ENCODE measurements at regions of chr9 and their contacts with region 1.

Region 1: GRCh38 chr9:131334629-131335367 is 45.3 kb downstream of the PLPP7 start:
- DNase-seq: no peak
- ATAC-seq: no peak
- H3K4me3 ChIP-seq: no peak overlapping the region
- H3K27ac ChIP-seq: no peak overlapping the region
- H3K4me1 ChIP-seq: no peaks in the 10 kb centered on the region; the same call in 1 of the 2 replicates
- H3K27me3 ChIP-seq: no peaks in the 10 kb centered on the region
- CTCF ChIP-seq: no peak

Region 2: DNA sequence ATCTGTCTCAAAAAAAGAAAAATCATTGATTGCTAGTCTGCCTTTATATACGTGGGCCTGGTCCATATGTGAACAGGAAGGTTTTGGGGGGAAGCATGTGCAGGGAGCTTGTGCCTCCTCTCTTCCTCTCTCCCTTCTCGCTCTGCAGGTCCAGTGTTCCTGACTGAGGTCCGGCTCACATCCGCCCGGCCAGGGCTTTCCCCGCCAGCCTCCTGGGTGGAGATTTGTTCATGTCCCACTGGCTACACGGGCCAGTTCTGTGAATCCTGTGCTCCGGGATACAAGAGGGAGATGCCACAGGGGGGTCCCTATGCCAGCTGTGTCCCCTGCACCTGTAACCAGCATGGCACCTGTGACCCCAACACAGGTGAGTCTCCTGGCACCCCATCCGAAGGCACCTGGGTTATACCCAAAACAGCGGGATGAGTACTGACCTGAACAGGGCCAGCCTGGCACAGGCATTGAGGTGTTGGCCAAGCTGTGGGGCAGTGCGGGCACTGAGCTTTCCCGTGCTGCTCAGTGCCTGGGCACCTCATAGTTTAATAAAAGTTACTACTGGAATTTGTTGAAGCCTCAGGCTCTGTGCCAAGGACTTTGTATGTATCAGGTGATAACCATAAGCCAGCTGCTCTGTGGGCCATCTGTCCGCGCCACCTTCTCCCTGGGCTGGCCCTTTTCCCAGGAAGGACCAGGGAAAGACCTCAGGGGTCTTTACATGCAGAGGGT is 277.9 kb before region 1 on chr9:
- CTCF ChIA-PET with region 1: interaction called, 4 read pairs
- POLR2A ChIA-PET with region 1: no interaction called
- in situ Hi-C with region 1: no loop called
- intact Hi-C with region 1: loop called (anchors 5 kb)
- DNase-seq: no peak
- ATAC-seq: no peak
- H3K4me3 ChIP-seq: no peak overlapping the region
- H3K27ac ChIP-seq: no peak overlapping the region
- H3K4me1 ChIP-seq: no peaks in the 10 kb centered on the region
- H3K27me3 ChIP-seq: no peaks in the 10 kb centered on the region
- CTCF ChIP-seq: no peak

Region 3: GRCh38 chr9:131178382-131178781 is 156.4 kb before region 1 on chr9:
- CTCF ChIA-PET with region 1: interaction called, 5 read pairs
- POLR2A ChIA-PET with region 1: no interaction called
- in situ Hi-C with region 1: no loop called
- intact Hi-C with region 1: loop called (anchors 2 kb)
- DNase-seq: peak; percentile 43
- ATAC-seq: peak; percentile 97
- H3K4me3 ChIP-seq: no peak overlapping the region
- H3K27ac ChIP-seq: no peak overlapping the region
- H3K4me1 ChIP-seq: no peaks in the 10 kb centered on the region
- H3K27me3 ChIP-seq: no peaks in the 10 kb centered on the region
- CTCF ChIP-seq: peak; percentile 86

Region 4: GRCh38 chr9:131279927-131280570 is 54.7 kb before region 1 on chr9:
- CTCF ChIA-PET with region 1: interaction called, 12 read pairs
- POLR2A ChIA-PET with region 1: no interaction called
- in situ Hi-C with region 1: no loop called
- intact Hi-C with region 1: no loop called
- DNase-seq: no peak
- ATAC-seq: no peak
- H3K4me3 ChIP-seq: no peak overlapping the region
- H3K27ac ChIP-seq: no peak overlapping the region
- H3K4me1 ChIP-seq: no peaks in the 10 kb centered on the region
- H3K27me3 ChIP-seq: peaks cover 2% of the 10 kb centered on the region; the same call in 1 of the 2 replicates
- CTCF ChIP-seq: no peak